ENCODE measurements at regions of chr3 and their contacts with region 1.

Region 1: DNA sequence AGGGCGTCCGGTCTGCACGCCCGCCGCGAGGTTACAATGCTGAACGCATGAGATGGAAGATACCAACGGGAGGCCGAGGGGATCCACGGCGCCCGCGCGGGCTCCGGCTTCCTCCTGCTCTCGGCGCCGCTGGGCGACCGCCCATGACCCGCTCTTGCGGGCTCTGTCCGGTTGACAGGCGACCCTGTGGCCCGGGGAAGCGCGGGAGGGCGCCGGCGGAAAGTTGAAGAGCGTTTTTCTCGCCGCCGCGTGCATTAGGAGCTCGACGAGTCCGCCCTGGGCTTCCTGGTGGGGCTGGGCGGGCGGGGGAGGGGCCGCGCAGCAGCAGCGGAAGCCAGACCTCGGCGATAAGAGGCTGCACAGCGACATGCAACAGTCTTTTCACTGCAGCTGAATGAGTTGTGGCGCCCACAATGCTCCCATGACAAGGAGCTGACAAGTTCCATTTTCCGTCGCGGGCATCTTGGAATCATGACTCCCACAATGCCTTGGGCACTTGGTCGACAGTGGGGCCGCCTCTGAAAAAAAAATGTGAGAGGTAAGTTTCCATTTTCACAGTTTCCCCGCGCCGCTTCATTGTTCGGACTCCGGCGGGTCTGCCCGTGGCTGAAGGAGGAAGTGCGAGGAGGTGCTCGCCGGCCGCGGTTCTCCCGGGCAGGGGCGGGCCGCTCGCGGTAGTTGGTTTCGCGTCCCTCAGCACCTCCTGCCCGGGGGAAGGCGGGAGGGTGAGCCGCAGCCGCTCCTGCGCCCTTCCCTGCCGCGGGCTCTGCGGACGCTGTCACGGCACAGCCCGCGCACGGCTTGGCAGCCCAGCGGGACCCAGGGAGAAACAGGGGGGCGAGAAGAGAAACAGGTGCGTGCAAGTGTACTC is at the start of gene MBNL1:
- DNase-seq: peak; percentile 77 to 81
- H3K4me3 ChIP-seq: peak within 1 kb of the TSS; percentile 94
- H3K4me3 Mint-ChIP-seq: peak within 1 kb of the TSS; percentile 91
- H3K27ac Mint-ChIP-seq: peak within 1 kb of the TSS; percentile 56
- H3K4me1 ChIP-seq: peaks cover 42% of the 10 kb centered on the region
- H3K4me1 Mint-ChIP-seq: peaks cover 47% of the 10 kb centered on the region
- H3K27me3 ChIP-seq: no peaks in the 10 kb centered on the region
- H3K27me3 Mint-ChIP-seq: no peaks in the 10 kb centered on the region
- CTCF ChIP-seq: no peak
- total RNA-seq, gene MBNL1: 67.1 and 68.6 TPM in 2 replicates

Region 2: GRCh38 chr3:151974067-151974466 is 294.7 kb before region 1 on chr3:
- CTCF ChIA-PET with region 1: no interaction called
- POLR2A ChIA-PET with region 1: no interaction called
- intact Hi-C with region 1: loop called (anchors 2 kb)
- DNase-seq: no peak
- H3K4me3 ChIP-seq: no peak overlapping the region
- H3K4me3 Mint-ChIP-seq: no peak overlapping the region
- H3K27ac Mint-ChIP-seq: no peak overlapping the region
- H3K4me1 ChIP-seq: peaks cover 62% of the 10 kb centered on the region
- H3K4me1 Mint-ChIP-seq: peaks cover 34% of the 10 kb centered on the region
- H3K27me3 ChIP-seq: no peaks in the 10 kb centered on the region
- H3K27me3 Mint-ChIP-seq: no peaks in the 10 kb centered on the region
- CTCF ChIP-seq: no peak

Region 3: GRCh38 chr3:152258448-152259393 is 10.1 kb before region 1 on chr3:
- CTCF ChIA-PET with region 1: no interaction called
- POLR2A ChIA-PET with region 1: interaction called, 10 read pairs
- intact Hi-C with region 1: no loop called
- DNase-seq: peak; percentile 40 to 46
- H3K4me3 ChIP-seq: no peak overlapping the region
- H3K4me3 Mint-ChIP-seq: peak overlapping the region; percentile 63
- H3K27ac Mint-ChIP-seq: peak overlapping the region; percentile 76
- H3K4me1 ChIP-seq: peaks cover 24% of the 10 kb centered on the region
- H3K4me1 Mint-ChIP-seq: peaks cover 8% of the 10 kb centered on the region
- H3K27me3 ChIP-seq: no peaks in the 10 kb centered on the region
- H3K27me3 Mint-ChIP-seq: no peaks in the 10 kb centered on the region
- CTCF ChIP-seq: no peak

Region 4: DNA sequence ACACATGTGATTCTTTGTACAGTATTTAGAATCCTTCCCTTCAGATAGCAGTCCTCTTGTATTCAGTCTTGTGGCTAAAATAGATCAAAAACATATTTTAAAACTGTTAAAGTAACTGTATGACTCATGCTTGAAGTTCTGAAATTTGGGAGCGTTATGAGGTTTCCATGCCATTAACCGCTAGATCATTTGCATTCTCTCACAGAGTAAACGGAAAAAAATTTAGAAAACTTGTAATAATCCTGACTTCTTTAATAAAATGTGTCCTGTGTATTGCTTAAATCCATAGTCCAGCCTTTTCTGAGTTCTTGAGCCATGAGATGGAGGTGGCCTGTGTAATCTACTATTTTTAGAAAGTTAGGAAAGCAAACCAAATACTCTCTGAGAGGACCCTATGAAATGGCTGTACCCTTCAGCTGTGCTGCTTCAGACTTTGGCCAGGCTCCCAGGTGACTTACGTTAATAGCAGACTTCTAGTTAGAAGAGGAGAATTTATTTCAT is 33.8 kb after region 1 on chr3:
- CTCF ChIA-PET with region 1: no interaction called
- POLR2A ChIA-PET with region 1: no interaction called
- intact Hi-C with region 1: no loop called
- DNase-seq: no peak
- H3K4me3 ChIP-seq: no peak overlapping the region
- H3K4me3 Mint-ChIP-seq: no peak overlapping the region
- H3K27ac Mint-ChIP-seq: no peak overlapping the region
- H3K4me1 ChIP-seq: peaks cover 63% of the 10 kb centered on the region
- H3K4me1 Mint-ChIP-seq: peaks cover 11% of the 10 kb centered on the region
- H3K27me3 ChIP-seq: no peaks in the 10 kb centered on the region
- H3K27me3 Mint-ChIP-seq: no peaks in the 10 kb centered on the region
- CTCF ChIP-seq: no peak

Region 5: DNA sequence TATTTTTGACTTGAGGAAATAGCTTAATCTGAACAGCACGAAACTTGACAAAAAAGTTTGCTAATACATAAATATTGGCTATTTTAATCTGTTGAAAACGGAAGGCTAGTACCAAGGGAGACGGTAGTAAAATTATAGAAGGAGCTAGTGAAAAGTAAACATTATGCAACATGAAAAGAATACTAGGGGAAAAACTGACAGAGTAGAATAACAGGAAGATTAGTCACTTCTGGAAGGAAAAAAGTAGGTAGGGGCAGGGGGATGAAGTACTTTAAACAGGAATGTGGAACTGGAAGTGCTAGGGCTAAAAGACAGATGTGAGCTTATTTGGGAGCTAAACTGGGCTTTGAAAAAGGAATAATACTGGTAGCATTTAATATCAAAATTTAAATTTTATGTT is 60.1 kb after region 1 on chr3:
- CTCF ChIA-PET with region 1: no interaction called
- POLR2A ChIA-PET with region 1: interaction called, 5 read pairs
- intact Hi-C with region 1: loop called (anchors 5 kb)
- DNase-seq: peak in 1 of 2 experiments; percentile 44
- H3K4me3 ChIP-seq: no peak overlapping the region
- H3K4me3 Mint-ChIP-seq: peak overlapping the region; percentile 42
- H3K27ac Mint-ChIP-seq: peak overlapping the region; percentile 75
- H3K4me1 ChIP-seq: peaks cover 26% of the 10 kb centered on the region
- H3K4me1 Mint-ChIP-seq: peaks cover 16% of the 10 kb centered on the region
- H3K27me3 ChIP-seq: no peaks in the 10 kb centered on the region
- H3K27me3 Mint-ChIP-seq: no peaks in the 10 kb centered on the region
- CTCF ChIP-seq: no peak

Region 6: GRCh38 chr3:152444029-152444641 is 175.3 kb after region 1 on chr3:
- CTCF ChIA-PET with region 1: no interaction called
- POLR2A ChIA-PET with region 1: no interaction called
- intact Hi-C with region 1: loop called (anchors 2 kb)
- DNase-seq: peak in 1 of 2 experiments; percentile 12
- H3K4me3 ChIP-seq: no peak overlapping the region
- H3K4me3 Mint-ChIP-seq: no peak overlapping the region
- H3K27ac Mint-ChIP-seq: no peak overlapping the region
- H3K4me1 ChIP-seq: no peaks in the 10 kb centered on the region
- H3K4me1 Mint-ChIP-seq: no peaks in the 10 kb centered on the region
- H3K27me3 ChIP-seq: no peaks in the 10 kb centered on the region
- H3K27me3 Mint-ChIP-seq: no peaks in the 10 kb centered on the region
- CTCF ChIP-seq: peak; percentile 60 to 63

Measured in Caco-2 (cell line).